GM13977 (cell line): ENCODE measurements at regions of chr2 and their contacts with region 1.

Region 1: GRCh38 chr2:204691911-204692510 is 146.7 kb downstream of the PARD3B start:
- DNase-seq: peak; percentile 7
- CTCF ChIP-seq: peak; percentile 55

Region 2: DNA sequence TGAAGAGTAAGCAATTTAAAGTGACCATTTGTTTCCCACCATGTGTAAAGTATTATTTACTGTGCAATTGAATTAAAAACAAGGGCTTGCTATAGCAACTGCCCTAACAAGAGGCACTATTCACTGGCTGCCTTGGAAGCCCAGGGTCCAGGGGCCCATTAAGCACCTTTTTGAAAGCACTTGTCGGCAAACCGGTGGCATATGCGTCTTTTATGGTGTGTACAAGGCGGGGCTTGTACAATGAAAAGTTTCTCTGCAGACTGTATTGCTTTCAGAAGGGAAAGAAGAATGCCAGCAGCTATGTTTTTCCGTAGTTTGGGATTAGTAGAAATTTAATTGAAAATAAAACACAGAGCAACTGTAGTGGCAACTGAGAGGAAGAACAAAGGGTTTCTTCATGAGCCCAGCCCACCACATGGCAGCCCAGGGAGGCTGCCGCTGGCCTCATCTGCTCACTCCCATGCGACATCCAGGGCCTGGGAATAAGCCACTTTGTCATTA is 426.3 kb before region 1 on chr2:
- in situ Hi-C with region 1: no loop called
- DNase-seq: no peak
- CTCF ChIP-seq: no peak

Region 3: GRCh38 chr2:204325468-204325867 is 366.5 kb before region 1 on chr2:
- in situ Hi-C with region 1: loop called (anchors 25 kb)
- DNase-seq: peak; percentile 58
- CTCF ChIP-seq: peak; percentile 76

Region 4: DNA sequence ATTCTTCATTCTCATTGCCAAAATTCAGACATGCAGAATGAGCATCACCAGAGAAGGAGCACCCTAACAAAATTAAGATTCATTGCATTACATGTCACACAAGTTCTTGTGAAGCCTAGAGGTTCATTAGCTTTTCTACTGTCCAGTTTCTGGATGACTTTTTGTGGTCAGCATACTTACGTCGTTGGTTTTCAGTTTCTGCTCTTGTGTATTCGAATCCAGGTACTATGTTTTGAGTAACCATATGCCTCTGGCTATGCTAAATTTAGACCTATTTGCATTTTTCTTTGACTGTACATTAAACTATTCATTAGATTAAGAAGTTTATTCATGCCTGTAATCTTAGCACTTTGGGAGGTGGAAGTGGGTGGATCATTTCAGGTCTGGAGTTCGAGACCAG is 104.6 kb after region 1 on chr2:
- in situ Hi-C with region 1: loop called (anchors 25 kb)
- DNase-seq: peak; percentile 7
- CTCF ChIP-seq: no peak